Right ventricle myocardium inferior (tissue), 1 donor: ENCODE measurements at regions of chr12 and their contacts with region 1.

Region 1: GRCh38 chr12:57005980-57006808 is at the start of gene ZBTB39:
- DNase-seq: peak; percentile 77
- ATAC-seq: peak; percentile 82
- total RNA-seq, gene ZBTB39: 3.3 TPM

Region 2: GRCh38 chr12:56839915-56840325 is 166.3 kb before region 1 on chr12:
- intact Hi-C with region 1: loop called (anchors 5 kb)
- DNase-seq: peak; percentile 71
- ATAC-seq: peak; percentile 60

Region 3: GRCh38 chr12:56947633-56948456 is 58.3 kb before region 1 on chr12:
- intact Hi-C with region 1: loop called (anchors 1 kb)
- DNase-seq: no peak
- ATAC-seq: no peak

Region 4: DNA sequence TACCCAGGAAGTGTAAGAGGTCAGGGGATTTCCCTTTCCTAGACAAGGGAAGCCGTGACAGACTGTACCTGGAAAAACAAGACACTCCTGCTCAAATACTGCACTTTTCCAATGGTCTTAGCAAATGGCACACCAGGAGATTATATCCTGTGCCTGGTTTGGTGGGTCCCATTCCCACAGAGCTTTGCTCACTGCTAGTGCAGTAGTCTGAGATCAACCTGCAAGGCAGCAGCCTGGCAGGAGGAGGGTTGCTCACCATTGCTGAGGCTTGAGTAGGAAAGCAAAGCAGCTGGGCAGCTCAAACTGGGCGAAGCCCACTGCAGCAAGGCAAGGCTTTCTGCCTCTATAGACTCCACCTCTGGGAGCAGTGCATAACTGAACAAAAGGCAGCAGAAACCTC is 47.8 kb before region 1 on chr12:
- intact Hi-C with region 1: no loop called
- DNase-seq: no peak
- ATAC-seq: no peak